ENCODE measurements at regions of chr10 and their contacts with region 1.

Region 1: GRCh38 chr10:4849555-4850242 is 23.7 kb downstream of the AKR1E2 start:
- DNase-seq: peak; percentile 86 to 94 (median 93)
- H3K4me3 ChIP-seq: no peak overlapping the region
- H3K27ac ChIP-seq: no peak overlapping the region
- H3K4me1 ChIP-seq: peaks cover 1% of the 10 kb centered on the region
- H3K27me3 ChIP-seq: no peaks in the 10 kb centered on the region
- CTCF ChIP-seq: peak; percentile 87 to 99 (median 99)
- EP300 ChIP-seq: no peak
- POLR2A ChIP-seq: peak; percentile 32

Region 2: DNA sequence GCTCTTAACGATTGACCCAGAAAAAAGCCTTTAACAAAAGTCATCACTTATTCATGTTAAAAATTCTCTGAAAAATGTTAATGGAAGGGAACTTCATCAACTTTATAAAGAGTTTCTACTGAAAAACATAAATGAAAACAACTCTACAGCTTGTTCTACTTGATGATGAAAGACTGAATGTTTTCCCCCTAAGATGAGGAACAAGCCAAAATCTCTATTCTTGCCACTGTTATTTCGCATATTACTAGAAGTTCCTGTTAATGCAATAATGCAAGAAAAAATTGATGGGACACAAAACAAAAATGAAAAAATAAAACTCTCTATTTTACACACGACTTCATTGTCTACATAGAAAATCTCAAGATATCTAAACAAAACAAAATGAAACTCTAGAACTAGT is 273.5 kb before region 1 on chr10:
- intact Hi-C with region 1: no loop called
- DNase-seq: no peak
- H3K4me3 ChIP-seq: no peak overlapping the region
- H3K27ac ChIP-seq: no peak overlapping the region
- H3K4me1 ChIP-seq: no peaks in the 10 kb centered on the region
- H3K27me3 ChIP-seq: no peaks in the 10 kb centered on the region
- CTCF ChIP-seq: no peak
- EP300 ChIP-seq: no peak
- POLR2A ChIP-seq: no peak

Region 3: DNA sequence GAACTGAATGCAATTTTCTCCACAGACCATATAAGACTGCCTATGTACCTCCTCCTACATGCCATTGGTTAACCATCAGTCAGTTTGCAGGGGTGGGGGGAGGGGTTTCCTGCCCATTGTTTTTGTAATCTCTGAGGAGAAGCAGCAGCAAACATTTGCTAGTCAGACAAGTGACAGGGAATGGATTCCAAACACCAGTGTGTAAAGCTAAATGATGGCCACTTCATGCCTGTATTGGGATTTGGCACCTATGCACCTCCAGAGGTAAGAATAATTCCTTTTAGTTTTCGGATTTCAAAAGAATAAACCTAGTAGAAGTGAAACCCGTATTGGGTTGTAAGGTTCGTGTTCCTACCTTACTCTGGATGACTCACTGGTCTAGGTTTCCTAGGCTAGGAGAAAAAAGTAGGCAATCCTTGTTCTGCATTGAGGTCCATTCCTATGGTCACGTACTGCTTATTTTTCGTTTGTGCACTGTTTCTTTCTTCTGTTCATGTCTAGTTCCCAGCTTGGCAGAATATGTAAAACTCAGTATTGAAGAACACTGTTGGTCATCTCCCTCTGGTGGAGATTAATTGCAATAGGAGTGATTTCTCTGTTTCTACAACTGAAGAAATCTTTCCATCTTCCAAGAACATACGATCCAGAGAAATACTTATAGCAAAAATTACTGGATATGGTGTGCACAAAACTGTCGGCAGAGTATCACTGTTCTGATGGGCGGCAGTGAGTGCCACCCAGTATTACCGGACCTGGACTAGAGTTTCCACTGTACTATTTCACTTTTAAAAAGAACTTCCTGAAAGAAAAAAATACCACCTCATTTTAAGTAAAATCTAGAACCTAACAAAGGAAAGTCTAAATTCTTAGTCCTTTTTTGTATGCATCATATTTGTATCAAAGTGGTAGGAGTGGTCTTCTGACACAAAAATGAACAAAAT is 244.8 kb after region 1 on chr10 and contains the start of gene AKR1C3:
- intact Hi-C with region 1: loop called in 3 of 4 experiments (anchors 5 kb)
- DNase-seq: no peak
- H3K4me3 ChIP-seq: peak within 1 kb of the TSS; percentile 30
- H3K27ac ChIP-seq: peak within 1 kb of the TSS in 1 of 2 donors; percentile 11
- H3K4me1 ChIP-seq: no peaks in the 10 kb centered on the region
- H3K27me3 ChIP-seq: no peaks in the 10 kb centered on the region
- CTCF ChIP-seq: peak; percentile 28 to 88 (median 77)
- EP300 ChIP-seq: no peak
- POLR2A ChIP-seq: no peak
- total RNA-seq, gene AKR1C3: 10.7 to 26.5 (median 19.3) TPM

Region 4: DNA sequence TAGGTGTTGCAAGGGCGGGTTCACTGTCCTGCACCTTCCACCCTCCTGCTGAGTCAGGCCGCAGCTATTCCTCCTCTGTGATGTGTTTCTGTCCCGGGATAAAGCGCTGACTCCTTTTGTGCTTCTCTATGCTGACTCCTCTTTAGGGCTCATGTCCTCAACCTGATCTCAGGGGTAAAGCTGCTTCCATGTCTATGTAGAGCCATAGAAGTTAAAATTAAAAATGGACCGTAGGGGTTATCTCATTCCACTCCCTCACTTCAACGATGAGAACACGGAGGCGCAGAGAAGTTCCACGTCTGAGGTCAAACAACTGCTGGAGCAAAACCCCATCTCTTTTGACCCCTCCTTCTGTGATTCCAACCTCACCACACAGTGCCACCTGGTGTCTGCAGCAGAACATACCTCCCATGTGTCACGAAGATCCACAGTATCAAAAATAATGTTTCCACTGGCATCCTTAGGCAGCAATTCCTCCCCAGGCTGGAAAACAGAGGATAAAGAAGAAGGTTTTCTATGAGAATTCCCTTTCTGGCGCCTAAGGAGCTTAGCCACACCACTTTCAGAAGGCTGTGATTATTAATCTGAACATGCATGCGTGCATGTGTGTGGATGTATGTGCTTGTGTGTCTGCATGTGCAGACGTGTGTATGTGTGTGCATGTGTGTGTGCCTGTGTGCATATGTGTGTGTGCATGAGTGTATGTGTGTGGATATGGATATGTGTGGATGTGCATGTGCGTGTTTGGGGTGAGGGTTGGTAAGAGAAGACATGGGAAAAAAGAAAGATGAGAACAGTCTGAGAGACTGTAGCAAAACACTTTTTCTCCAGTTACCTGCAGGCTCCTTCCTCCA is 433.8 kb after region 1 on chr10:
- intact Hi-C with region 1: loop called in 2 of 4 experiments (anchors 10 kb)
- DNase-seq: peak; percentile 20 to 55 (median 29)
- H3K4me3 ChIP-seq: no peak overlapping the region
- H3K27ac ChIP-seq: no peak overlapping the region
- H3K4me1 ChIP-seq: no peaks in the 10 kb centered on the region
- H3K27me3 ChIP-seq: no peaks in the 10 kb centered on the region
- CTCF ChIP-seq: peak in 1 of 3 donors; percentile 22
- EP300 ChIP-seq: no peak
- POLR2A ChIP-seq: no peak

Region 5: GRCh38 chr10:5381187-5381586 is 531.5 kb after region 1 on chr10:
- intact Hi-C with region 1: loop called in 1 of 4 experiments (anchors 5 kb)
- DNase-seq: no peak
- H3K4me3 ChIP-seq: no peak overlapping the region
- H3K27ac ChIP-seq: no peak overlapping the region
- H3K4me1 ChIP-seq: no peaks in the 10 kb centered on the region
- H3K27me3 ChIP-seq: no peaks in the 10 kb centered on the region
- CTCF ChIP-seq: no peak
- EP300 ChIP-seq: no peak
- POLR2A ChIP-seq: no peak

Region 6: DNA sequence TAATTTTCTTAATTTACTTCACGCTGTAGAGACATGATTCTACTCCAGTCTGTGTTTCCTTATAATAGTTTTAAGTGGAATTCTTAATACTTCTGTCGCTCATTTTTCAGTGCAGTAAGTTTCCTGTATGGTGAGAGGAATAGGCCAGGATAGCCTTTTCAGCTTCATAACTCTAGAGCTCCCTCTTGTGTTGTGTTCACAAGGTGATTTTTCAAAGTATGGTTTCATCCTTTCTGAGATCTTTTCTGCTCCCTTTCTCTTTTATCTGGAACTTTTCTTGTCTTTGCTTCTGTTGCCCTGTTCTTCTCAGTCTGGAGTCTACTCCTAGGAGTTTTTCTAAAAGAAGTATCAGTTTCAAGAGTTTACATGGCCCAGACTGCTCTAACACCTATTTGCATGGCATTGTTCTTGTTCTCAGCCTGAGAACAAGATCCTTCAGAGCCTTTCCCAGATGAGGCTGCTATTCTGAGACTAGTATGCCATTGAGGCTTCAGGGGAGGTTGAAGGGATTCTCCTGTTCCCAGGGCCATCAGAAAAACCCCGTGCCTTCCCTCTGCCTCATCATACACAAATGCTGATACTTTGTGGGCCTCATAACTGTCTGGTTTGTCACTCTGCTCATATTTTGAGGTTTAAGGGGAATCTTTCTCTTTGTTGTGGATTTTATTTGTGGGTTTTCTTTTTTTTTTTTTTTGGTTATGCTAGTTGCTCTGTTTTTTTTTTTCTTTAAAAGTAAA is 584.5 kb after region 1 on chr10:
- intact Hi-C with region 1: loop called in 1 of 4 experiments (anchors 5 kb)
- DNase-seq: no peak
- H3K4me3 ChIP-seq: no peak overlapping the region
- H3K27ac ChIP-seq: no peak overlapping the region
- H3K4me1 ChIP-seq: no peaks in the 10 kb centered on the region
- H3K27me3 ChIP-seq: no peaks in the 10 kb centered on the region
- CTCF ChIP-seq: peak in 2 of 3 donors; percentile 24 to 28
- EP300 ChIP-seq: no peak
- POLR2A ChIP-seq: no peak

Measured in ovary (tissue), 10 donors.